ENCODE measurements at regions of chr6 and their contacts with region 1.

Region 1: DNA sequence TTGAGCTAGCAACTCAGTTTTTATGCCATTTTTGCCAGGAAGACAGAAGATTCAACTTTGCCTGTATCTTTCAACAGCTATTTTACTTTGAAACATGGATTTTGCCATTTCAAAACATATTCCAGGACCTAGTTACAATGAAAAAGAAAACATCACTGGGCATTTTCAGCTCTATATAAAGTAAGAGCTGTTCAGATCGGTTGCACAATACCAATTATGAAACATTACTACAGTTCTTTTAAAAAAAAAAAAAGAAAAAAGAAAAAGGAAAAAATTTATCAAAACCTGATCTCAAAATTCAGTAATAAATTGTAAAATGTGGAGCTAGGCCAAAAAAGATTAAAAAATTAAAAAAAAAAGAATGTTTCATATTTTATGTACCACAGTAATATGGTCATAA is 15.6 kb downstream of the BCLAF1 start:
- DNase-seq: no peak
- H3K4me3 ChIP-seq: no peak overlapping the region
- H3K27ac ChIP-seq: no peak overlapping the region
- H3K4me1 ChIP-seq: no peaks in the 10 kb centered on the region
- CTCF ChIP-seq: no peak

Region 2: DNA sequence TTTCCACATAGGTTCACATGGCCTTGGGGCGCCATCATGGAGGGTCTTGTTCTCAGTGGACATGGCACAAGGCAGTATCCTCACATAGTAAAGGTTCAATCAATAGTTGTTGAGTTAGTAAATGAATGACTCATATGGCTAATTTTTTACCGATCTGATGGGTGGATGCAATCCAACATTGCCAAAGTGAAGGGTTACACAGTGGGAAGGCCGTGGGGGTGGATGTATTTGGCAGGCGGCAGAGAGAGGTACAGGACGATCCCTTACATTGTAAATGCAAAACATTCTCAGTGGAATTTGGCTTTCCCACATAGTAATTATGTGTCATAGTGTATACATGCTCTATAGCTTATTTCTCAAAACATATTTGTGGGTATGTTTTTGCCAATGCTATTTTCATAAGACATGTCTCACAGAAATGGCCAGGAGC is 443.6 kb before region 1 on chr6:
- CTCF ChIA-PET with region 1: no interaction called
- POLR2A ChIA-PET with region 1: no interaction called
- intact Hi-C with region 1: no loop called
- DNase-seq: no peak
- H3K4me3 ChIP-seq: no peak overlapping the region
- H3K27ac ChIP-seq: no peak overlapping the region
- H3K4me1 ChIP-seq: no peaks in the 10 kb centered on the region
- CTCF ChIP-seq: no peak

Region 3: DNA sequence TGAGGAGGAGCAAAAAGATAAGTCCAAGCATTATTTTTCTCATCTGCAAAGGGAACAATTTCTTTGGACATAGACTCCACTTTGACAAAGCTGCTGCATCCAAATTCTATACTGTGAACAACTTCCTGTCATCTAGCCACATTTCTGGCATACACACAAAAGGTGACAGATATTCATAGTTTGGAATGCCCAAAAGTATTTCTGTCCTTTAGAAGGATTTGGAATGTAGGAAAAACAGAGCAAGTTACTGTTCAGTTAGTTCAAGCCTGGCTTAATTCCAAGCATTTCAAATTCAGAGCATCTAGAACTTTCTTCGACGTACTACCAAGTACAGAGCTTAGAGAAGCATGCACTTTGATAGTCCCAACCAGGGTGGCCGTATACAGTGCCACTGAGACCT is 288.6 kb before region 1 on chr6:
- CTCF ChIA-PET with region 1: no interaction called
- POLR2A ChIA-PET with region 1: no interaction called
- intact Hi-C with region 1: no loop called
- DNase-seq: no peak
- H3K4me3 ChIP-seq: no peak overlapping the region
- H3K27ac ChIP-seq: no peak overlapping the region
- H3K4me1 ChIP-seq: no peaks in the 10 kb centered on the region
- CTCF ChIP-seq: no peak

Region 4: DNA sequence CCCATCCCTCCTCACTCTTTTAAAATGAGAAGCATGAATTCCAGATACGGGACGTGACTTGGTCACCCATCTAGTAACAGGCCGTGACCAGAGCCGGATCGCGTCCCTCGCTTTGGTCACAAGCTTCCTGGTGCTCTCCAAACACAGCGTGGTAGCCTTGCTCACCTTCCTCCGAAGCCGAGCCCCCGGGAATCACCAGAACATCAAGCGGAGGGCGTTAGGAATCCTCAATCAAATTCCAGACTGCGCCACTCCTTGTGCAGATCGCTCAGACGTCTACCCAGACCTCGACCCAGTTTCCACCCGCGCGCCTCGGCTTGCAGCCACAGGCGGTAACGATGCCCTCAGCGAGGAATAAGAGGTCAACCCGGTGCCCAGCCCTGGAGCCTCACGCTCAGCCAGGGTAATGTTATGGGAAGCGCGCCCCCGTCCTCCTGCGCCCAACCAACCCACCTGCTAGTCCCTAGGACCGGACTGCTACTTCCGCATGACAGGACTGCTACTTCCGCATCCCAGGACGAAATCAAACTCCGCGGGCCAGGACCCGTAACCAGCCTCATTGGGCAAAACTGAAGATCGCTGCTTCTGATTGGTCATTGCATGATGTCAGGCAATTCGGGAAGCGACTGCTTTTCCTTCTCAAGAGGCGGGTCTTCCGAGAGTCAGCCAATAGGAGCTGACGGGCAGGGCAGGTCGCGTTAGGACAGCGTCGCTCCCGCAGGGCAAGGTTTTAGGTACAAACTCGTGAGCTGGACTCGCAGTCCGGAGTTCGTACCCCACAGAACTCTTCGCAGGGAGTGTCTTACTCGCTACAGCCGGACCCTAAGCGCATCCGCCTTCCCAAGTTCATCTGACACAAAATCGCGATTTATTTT is 24.0 kb before region 1 on chr6 and contains the start of gene MTFR2:
- CTCF ChIA-PET with region 1: no interaction called
- POLR2A ChIA-PET with region 1: interaction called, 11 read pairs
- intact Hi-C with region 1: loop called (anchors 2 kb)
- DNase-seq: peak; percentile 99
- H3K4me3 ChIP-seq: peak within 1 kb of the TSS; percentile 92
- H3K27ac ChIP-seq: peak within 1 kb of the TSS; percentile 46
- H3K4me1 ChIP-seq: peaks cover 9% of the 10 kb centered on the region
- CTCF ChIP-seq: no peak
- total RNA-seq, gene MTFR2: 9.3 and 10.4 TPM in 2 replicates

Region 5: DNA sequence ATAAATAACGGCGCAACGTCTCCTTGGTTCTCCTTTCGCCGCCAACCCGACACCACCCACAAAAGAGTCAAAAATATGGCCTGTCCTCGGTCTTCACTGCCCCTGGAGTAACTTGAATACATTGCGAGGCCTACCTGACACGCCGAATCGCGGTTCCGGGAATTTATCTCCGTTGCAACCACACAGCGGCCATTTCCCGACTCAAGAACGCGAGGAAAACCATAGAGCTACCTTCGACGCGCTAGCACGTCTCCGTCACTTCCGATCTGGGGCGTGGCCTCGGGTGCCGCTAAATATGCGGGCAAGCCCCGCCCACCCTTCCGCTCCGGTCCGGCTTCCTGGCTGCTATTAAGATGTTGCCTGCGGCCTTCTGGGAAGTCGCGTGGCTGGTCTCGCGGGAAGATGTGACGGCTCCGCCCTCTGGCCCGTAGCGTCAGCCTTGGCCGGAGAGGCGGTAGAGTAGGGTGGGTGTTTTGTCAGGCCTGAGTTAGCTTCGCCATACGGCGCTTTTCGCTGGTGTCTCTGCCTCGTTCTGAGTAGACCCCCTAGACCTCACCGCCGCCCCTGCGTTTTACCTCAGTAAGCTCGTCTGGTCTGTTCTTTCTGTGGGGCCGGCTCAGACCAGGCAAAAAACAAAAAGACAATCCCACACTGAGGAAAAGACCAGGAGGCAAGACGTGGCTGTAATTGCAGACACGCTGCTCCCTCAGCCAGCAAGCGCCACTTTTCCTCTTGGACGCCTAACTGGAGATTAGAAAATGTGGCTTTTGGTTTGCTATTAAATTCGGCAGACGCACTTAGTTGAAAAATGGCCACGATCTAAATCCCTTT is 15.7 kb after region 1 on chr6 and contains the start of gene BCLAF1:
- CTCF ChIA-PET with region 1: no interaction called
- POLR2A ChIA-PET with region 1: interaction called, 24 read pairs
- intact Hi-C with region 1: no loop called
- DNase-seq: peak; percentile 99
- H3K4me3 ChIP-seq: peak within 1 kb of the TSS; percentile 88
- H3K27ac ChIP-seq: peak within 1 kb of the TSS; percentile 97
- H3K4me1 ChIP-seq: peaks cover 42% of the 10 kb centered on the region
- CTCF ChIP-seq: peak; percentile 34; the same call in 1 of the 2 replicates
- total RNA-seq, gene BCLAF1: 130 and 228 TPM in 2 replicates

Region 6: GRCh38 chr6:136719280-136720044 is 445.4 kb after region 1 on chr6:
- CTCF ChIA-PET with region 1: no interaction called
- POLR2A ChIA-PET with region 1: no interaction called
- intact Hi-C with region 1: no loop called
- DNase-seq: peak; percentile 68
- H3K4me3 ChIP-seq: peak overlapping the region; percentile 62
- H3K27ac ChIP-seq: peak overlapping the region; percentile 93
- H3K4me1 ChIP-seq: peaks cover 74% of the 10 kb centered on the region
- CTCF ChIP-seq: no peak

Measured in OCI-LY7 (cell line).